Cardiac septum (tissue), 1 donor: ENCODE measurements at regions of chr4 and their contacts with region 1.

Region 1: DNA sequence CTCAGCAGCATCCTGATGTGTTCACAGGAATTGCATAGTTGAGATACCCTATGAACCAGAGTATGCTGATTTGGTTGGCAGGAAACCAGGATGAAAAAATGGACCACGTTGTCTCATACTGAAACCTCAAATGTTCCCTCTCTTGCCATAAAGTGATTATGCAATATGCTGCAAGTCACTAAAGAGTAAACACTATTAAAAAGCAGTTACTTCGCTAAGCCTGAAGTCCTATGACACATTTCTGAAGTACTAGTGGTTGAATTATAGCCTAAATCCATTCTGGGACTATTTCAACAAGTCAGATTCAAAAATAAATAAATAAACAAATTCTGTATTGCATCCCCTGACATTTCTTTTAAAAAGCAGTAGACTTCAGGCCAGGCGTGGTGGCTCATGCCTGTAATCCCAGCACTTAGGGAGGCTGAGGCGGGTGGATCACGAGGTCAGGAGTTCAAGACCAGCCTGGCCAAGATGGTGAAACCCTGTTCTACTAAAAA is 106.0 kb upstream of the NAP1L5 start:
- DNase-seq: no peak

Region 2: DNA sequence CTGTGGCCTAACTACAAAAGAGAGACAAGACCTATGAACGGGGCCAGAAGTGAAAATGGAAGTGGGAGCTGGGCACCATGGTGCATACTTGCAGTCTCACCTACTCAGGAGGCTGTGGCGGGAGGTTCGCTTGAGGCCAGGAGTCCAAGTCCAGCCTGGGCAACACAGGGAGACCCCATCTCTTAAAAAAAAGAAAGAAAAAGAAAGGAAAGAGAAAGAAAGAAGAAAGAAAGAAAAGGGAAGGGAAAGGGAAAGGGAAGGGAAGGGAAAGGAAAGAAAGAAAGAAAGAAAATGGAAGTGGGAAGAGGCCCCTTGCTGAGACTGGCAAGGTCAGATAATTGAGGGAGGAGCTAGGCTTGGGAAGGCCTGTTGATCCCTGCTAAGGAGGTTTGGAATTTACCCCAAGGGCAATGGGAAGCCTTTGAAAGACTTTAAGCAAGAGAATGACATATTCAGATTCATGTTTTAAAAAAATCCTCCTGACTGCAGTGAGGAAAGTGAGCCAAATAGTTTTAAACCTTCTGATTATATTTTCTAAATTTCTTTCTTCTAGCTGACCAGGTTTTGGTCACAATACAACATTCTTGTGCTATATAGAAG is 364.4 kb before region 1 on chr4:
- intact Hi-C with region 1: no loop called
- DNase-seq: no peak

Region 3: DNA sequence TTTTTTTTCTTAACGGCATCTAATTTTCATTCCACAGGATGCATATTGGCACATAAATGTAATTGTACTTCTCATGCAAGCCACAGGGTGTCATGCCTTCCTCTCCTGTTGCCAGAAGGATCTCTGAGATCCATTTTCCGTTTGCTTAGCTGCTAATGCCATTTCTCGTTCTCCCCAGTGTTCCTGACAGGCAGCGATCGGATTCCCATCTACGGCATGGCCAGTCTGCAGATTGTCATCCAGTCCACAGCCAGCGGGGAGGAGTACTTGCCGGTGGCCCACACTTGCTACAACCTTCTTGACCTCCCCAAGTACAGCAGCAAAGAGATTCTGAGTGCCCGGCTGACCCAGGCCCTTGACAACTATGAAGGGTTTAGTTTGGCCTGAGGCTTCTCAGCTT is 97.1 kb before region 1 on chr4:
- intact Hi-C with region 1: loop called (anchors 5 kb)
- DNase-seq: no peak

Region 4: DNA sequence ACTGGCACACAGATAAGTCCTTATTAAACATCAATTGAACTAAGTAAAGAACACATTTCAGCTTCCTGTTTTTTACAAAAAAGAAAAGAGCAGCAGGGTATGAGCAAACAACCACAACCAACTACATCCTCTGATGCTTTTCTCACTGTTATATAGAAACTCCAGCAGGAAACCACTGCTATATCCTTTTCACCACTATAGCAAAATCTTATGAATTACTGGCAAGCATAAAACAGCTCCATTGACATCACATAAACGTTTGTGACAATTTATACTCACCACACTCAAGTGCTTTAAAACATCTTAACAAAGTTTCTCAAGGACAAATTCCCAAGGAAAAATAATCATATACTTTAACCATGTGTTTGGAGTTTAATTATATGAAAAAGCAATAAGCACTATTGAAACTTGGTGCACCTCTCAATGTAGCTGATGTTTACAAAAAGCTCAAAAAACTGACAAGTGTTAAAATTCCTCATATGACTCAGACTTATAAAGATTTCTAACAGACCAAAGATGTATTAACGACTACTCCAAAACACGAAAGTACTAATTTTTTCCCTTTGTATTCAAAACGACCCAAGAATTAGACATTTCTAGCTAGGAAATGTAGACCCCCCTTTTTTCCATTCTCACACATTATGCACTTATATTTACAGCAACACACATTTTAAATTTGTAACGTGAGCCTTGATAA is 491.1 kb after region 1 on chr4:
- intact Hi-C with region 1: no loop called
- DNase-seq: no peak